ENCODE measurements at regions of chr7 and their contacts with region 1.

Region 1: DNA sequence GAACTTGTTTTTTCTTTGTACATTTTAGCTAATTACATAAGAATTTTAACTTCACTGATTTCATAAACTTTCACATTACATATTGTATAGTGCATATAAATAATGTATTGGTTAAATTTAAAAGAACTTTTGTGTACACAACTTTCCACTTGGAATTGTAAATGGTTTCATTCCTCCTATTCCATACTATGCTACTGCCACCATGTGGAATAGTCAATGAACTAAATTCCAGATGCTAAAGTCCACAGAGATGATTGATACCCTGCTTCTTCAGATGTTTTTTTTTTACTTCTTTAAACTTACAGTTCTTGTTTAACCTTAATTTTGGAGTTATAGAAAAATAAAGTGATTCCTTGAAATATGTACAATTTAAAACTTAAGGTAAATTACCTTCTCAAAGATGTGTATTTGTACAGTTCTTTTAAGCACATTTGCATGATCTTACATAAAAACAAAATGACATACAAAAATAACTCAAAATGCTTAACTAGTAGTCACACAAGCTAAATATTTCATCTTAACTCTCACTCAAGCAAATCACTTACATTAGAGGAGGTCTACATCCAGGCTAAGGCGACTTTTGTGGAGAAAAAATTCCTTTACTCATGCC is 247.6 kb upstream of the HGF start:
- DNase-seq: no peak
- H3K4me3 ChIP-seq: no peak overlapping the region
- H3K27ac ChIP-seq: no peak overlapping the region
- H3K4me1 ChIP-seq: peaks cover 0 to 9% of the 10 kb centered on the region in 2 donors
- H3K27me3 ChIP-seq: no peaks in the 10 kb centered on the region
- CTCF ChIP-seq: peak; percentile 11 to 43 (median 29)

Region 2: GRCh38 chr7:81715984-81716588 is 301.4 kb before region 1 on chr7:
- intact Hi-C with region 1: loop called (anchors 5 kb)
- DNase-seq: no peak
- H3K4me3 ChIP-seq: no peak overlapping the region
- H3K27ac ChIP-seq: no peak overlapping the region
- H3K4me1 ChIP-seq: no peaks in the 10 kb centered on the region
- H3K27me3 ChIP-seq: no peaks in the 10 kb centered on the region
- CTCF ChIP-seq: peak in 2 of 3 experiments; percentile 32 to 50

Region 3: GRCh38 chr7:81846398-81846797 is 171.0 kb before region 1 on chr7:
- intact Hi-C with region 1: no loop called
- DNase-seq: no peak
- H3K4me3 ChIP-seq: no peak overlapping the region
- H3K27ac ChIP-seq: no peak overlapping the region
- H3K4me1 ChIP-seq: no peaks in the 10 kb centered on the region
- H3K27me3 ChIP-seq: no peaks in the 10 kb centered on the region
- CTCF ChIP-seq: no peak

Region 4: GRCh38 chr7:81887098-81888090 is 130.0 kb before region 1 on chr7:
- intact Hi-C with region 1: no loop called
- DNase-seq: no peak
- H3K4me3 ChIP-seq: no peak overlapping the region
- H3K27ac ChIP-seq: no peak overlapping the region
- H3K4me1 ChIP-seq: no peaks in the 10 kb centered on the region
- H3K27me3 ChIP-seq: no peaks in the 10 kb centered on the region
- CTCF ChIP-seq: no peak

Region 5: GRCh38 chr7:81990395-81990794 is 27.0 kb before region 1 on chr7:
- intact Hi-C with region 1: no loop called
- DNase-seq: no peak
- H3K4me3 ChIP-seq: no peak overlapping the region
- H3K27ac ChIP-seq: no peak overlapping the region
- H3K4me1 ChIP-seq: no peaks in the 10 kb centered on the region
- H3K27me3 ChIP-seq: no peaks in the 10 kb centered on the region
- CTCF ChIP-seq: no peak

Region 6: GRCh38 chr7:82131215-82131614 is 113.8 kb after region 1 on chr7:
- intact Hi-C with region 1: no loop called
- DNase-seq: no peak
- H3K4me3 ChIP-seq: no peak overlapping the region
- H3K27ac ChIP-seq: no peak overlapping the region
- H3K4me1 ChIP-seq: no peaks in the 10 kb centered on the region
- H3K27me3 ChIP-seq: no peaks in the 10 kb centered on the region
- CTCF ChIP-seq: no peak

Measured in ascending aorta (tissue), 2 donors.